Activated naive CD4-positive, alpha-beta T cell treated with anti-CD3 and anti-CD28 coated beads for 36 hours (primary cell): ENCODE measurements at regions of chr3 and their contacts with region 1.

Region 1: GRCh38 chr3:192467230-192468140 is 259.9 kb downstream of the FGF12 start:
- DNase-seq: peak; percentile 68
- H3K4me3 Mint-ChIP-seq: no peak overlapping the region
- H3K27ac Mint-ChIP-seq: no peak overlapping the region
- H3K4me1 Mint-ChIP-seq: no peaks in the 10 kb centered on the region
- H3K27me3 Mint-ChIP-seq: peaks cover 16% of the 10 kb centered on the region

Region 2: DNA sequence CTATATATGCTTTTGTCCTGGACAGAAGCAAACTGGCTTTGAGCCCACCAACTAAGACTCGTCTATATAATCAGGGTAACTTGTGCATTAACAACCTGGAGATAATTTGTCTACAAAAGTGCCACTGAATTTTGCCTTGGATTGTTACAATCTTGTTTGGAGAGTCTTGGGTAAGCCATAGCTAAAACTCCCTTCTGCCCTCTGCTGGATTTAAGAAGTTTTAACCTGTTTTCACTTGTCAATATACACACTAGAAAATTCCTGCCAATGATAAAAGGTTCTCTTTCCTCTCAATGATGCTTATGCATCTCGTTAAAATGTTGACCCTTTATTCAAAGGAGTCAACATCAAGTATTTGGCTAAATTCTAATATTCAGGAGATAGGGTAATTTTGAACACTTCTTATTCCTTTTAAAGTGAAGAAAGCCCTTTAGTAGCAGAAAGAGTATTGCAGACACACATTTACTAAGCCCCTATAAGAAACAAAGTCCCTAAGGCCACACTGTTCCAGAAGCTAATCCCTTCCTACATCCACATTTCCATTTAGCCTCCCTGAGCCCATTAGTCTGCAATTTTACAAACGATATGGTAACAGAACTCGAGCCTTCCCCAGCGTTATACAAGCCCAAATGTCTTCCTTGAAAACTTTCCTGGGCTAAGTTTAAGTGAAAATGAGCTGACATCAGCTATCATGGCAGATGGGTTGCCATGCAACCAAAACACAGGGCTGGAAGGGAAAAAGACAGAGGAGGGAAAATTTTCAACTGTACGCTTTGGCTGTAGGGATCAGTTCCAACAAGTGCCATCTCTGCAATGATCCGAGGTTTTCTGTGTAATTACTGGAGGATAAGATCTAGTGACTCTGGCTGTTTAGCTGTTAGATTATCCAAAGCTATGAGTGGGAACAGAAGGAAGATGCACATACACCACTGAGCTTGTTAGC is 335.7 kb after region 1 on chr3:
- CTCF ChIA-PET with region 1: interaction called, 9 read pairs
- intact Hi-C with region 1: loop called (anchors 1 kb)
- DNase-seq: no peak
- H3K4me3 Mint-ChIP-seq: no peak overlapping the region
- H3K27ac Mint-ChIP-seq: no peak overlapping the region
- H3K4me1 Mint-ChIP-seq: no peaks in the 10 kb centered on the region
- H3K27me3 Mint-ChIP-seq: no peaks in the 10 kb centered on the region

Region 3: GRCh38 chr3:193040836-193041672 is 573.6 kb after region 1 on chr3:
- CTCF ChIA-PET with region 1: no interaction called
- intact Hi-C with region 1: loop called (anchors 2 kb)
- DNase-seq: peak; percentile 9
- H3K4me3 Mint-ChIP-seq: no peak overlapping the region
- H3K27ac Mint-ChIP-seq: no peak overlapping the region
- H3K4me1 Mint-ChIP-seq: no peaks in the 10 kb centered on the region
- H3K27me3 Mint-ChIP-seq: no peaks in the 10 kb centered on the region

Region 4: DNA sequence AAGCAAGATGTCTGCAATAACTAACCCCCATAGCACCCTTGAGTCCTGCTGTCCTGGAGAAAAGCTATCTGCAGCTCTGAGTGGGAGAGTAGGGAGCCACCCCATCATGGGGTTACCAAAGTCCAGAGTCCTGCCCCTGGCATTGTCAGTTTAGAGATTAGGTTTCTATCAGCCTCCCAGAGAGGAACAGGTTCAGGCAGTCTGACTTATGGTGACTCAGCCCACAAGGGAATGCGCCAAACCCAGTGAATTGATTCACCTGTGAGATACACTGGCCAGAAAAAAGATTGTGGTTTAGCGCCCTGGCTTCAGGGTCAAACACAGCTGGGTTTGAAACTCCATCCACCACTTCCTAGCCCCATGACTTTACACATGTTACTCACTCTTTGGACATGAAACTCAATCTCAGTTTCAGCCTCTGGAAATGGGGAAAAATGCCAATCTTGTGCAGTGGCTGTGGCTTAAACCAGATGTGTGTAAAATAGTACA is 1404.8 kb after region 1 on chr3:
- CTCF ChIA-PET with region 1: no interaction called
- intact Hi-C with region 1: no loop called
- DNase-seq: peak; percentile 9
- H3K4me3 Mint-ChIP-seq: no peak overlapping the region
- H3K27ac Mint-ChIP-seq: no peak overlapping the region
- H3K4me1 Mint-ChIP-seq: peaks cover 2% of the 10 kb centered on the region
- H3K27me3 Mint-ChIP-seq: peaks cover 6% of the 10 kb centered on the region